ENCODE measurements at regions of chr14 and their contacts with region 1.

Region 1: GRCh38 chr14:88189417-88190191 is 133.5 kb downstream of the KCNK10 start:
- DNase-seq: peak; percentile 84
- H3K4me3 Mint-ChIP-seq: peak overlapping the region; percentile 70
- H3K27ac Mint-ChIP-seq: no peak overlapping the region
- H3K4me1 Mint-ChIP-seq: peaks cover 14% of the 10 kb centered on the region
- H3K27me3 Mint-ChIP-seq: peaks cover 9% of the 10 kb centered on the region
- CTCF ChIP-seq: peak; percentile 38

Region 2: GRCh38 chr14:87916103-87916885 is 273.3 kb before region 1 on chr14:
- CTCF ChIA-PET with region 1: no interaction called
- intact Hi-C with region 1: no loop called
- DNase-seq: no peak
- H3K4me3 Mint-ChIP-seq: no peak overlapping the region
- H3K27ac Mint-ChIP-seq: no peak overlapping the region
- H3K4me1 Mint-ChIP-seq: no peaks in the 10 kb centered on the region
- H3K27me3 Mint-ChIP-seq: no peaks in the 10 kb centered on the region
- CTCF ChIP-seq: no peak

Region 3: DNA sequence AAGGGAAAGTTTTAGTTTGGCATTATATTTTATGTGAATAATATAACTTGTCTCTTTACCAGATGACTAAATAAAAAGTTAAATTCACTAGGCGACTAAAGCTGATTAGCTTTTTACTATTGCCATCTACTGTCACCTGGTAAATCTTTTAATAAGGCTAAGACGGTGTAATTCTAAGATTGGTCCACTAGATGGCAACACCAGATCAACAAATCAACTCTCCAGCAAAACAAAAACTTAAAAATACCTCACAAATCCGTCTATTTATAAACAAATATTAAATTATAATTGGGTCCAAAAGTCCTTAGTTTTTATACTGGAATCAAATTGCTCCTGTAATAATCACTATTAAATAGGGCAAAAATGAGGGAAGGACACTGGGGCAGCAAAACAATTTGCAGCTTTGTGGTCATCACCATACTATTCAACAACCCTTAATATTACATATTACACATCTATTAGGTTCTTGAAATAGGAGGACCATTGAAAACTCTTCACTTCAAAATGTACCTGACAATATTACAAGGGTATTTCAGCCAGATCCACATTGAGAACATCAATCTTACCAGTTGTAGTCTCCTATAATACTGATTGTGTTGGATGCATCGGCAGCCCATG is 244.5 kb before region 1 on chr14:
- CTCF ChIA-PET with region 1: interaction called, 7 read pairs
- intact Hi-C with region 1: loop called (anchors 5 kb)
- DNase-seq: peak; percentile 4
- H3K4me3 Mint-ChIP-seq: no peak overlapping the region
- H3K27ac Mint-ChIP-seq: no peak overlapping the region
- H3K4me1 Mint-ChIP-seq: no peaks in the 10 kb centered on the region
- H3K27me3 Mint-ChIP-seq: no peaks in the 10 kb centered on the region
- CTCF ChIP-seq: no peak

Region 4: GRCh38 chr14:88013750-88014349 is 175.8 kb before region 1 on chr14:
- CTCF ChIA-PET with region 1: interaction called, 17 read pairs
- intact Hi-C with region 1: loop called (anchors 5 kb)
- DNase-seq: peak; percentile 72
- H3K4me3 Mint-ChIP-seq: no peak overlapping the region
- H3K27ac Mint-ChIP-seq: no peak overlapping the region
- H3K4me1 Mint-ChIP-seq: no peaks in the 10 kb centered on the region
- H3K27me3 Mint-ChIP-seq: no peaks in the 10 kb centered on the region
- CTCF ChIP-seq: peak; percentile 55

Region 5: GRCh38 chr14:88137327-88137726 is 52.3 kb before region 1 on chr14:
- CTCF ChIA-PET with region 1: no interaction called
- intact Hi-C with region 1: no loop called
- DNase-seq: no peak
- H3K4me3 Mint-ChIP-seq: no peak overlapping the region
- H3K27ac Mint-ChIP-seq: no peak overlapping the region
- H3K4me1 Mint-ChIP-seq: no peaks in the 10 kb centered on the region
- H3K27me3 Mint-ChIP-seq: peaks cover 14% of the 10 kb centered on the region
- CTCF ChIP-seq: no peak

Region 6: DNA sequence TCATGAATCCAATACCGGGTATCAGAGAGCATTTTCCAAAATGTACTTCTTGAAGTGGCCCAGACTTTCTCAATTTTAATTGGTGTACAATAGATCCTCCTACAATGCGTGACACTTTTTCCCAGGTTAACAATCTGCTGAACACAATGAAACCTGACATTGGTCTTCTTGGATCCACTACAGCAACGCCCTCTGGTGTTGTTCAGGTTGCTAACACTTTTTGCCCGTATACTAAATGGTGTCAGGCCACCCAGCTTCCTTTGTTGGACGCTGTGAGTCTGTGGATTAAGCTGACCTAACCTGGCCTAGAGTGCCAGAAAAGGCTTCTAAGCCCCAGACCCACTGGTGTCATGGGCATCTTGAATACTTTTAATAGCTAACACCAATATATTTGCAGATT is 44.3 kb after region 1 on chr14:
- CTCF ChIA-PET with region 1: interaction called, 4 read pairs
- intact Hi-C with region 1: loop called (anchors 1 kb)
- DNase-seq: peak; percentile 24
- H3K4me3 Mint-ChIP-seq: no peak overlapping the region
- H3K27ac Mint-ChIP-seq: no peak overlapping the region
- H3K4me1 Mint-ChIP-seq: no peaks in the 10 kb centered on the region
- H3K27me3 Mint-ChIP-seq: peaks cover 10% of the 10 kb centered on the region
- CTCF ChIP-seq: peak; percentile 17

Region 7: GRCh38 chr14:88281447-88281846 is 91.8 kb after region 1 on chr14:
- CTCF ChIA-PET with region 1: no interaction called
- intact Hi-C with region 1: no loop called
- DNase-seq: no peak
- H3K4me3 Mint-ChIP-seq: no peak overlapping the region
- H3K27ac Mint-ChIP-seq: no peak overlapping the region
- H3K4me1 Mint-ChIP-seq: no peaks in the 10 kb centered on the region
- H3K27me3 Mint-ChIP-seq: peaks cover 32% of the 10 kb centered on the region
- CTCF ChIP-seq: no peak

Region 8: GRCh38 chr14:88380405-88380804 is 190.8 kb after region 1 on chr14:
- CTCF ChIA-PET with region 1: interaction called, 22 read pairs
- intact Hi-C with region 1: loop called (anchors 1 kb)
- DNase-seq: no peak
- H3K4me3 Mint-ChIP-seq: no peak overlapping the region
- H3K27ac Mint-ChIP-seq: no peak overlapping the region
- H3K4me1 Mint-ChIP-seq: no peaks in the 10 kb centered on the region
- H3K27me3 Mint-ChIP-seq: no peaks in the 10 kb centered on the region
- CTCF ChIP-seq: no peak

Region 9: DNA sequence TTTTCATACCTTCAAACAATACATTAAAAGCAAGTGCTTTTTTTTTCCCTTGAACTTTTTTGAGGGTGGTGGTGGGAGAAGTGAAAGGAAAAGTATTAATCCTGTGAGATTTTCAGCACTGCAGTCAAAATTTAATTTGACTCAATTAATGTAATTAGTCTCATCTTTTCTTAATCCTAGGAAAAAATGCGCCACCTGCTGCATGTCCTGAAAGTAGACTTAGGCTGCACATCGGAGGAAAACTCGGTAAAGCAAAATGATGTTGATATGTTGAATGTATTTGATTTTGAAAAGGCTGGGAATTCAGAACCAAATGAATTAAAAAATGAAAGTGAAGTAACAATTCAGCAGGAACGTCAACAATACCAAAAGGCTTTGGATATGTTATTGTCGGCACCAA is 248.1 kb after region 1 on chr14:
- CTCF ChIA-PET with region 1: interaction called, 3 read pairs
- intact Hi-C with region 1: loop called (anchors 2 kb)
- DNase-seq: no peak
- H3K4me3 Mint-ChIP-seq: no peak overlapping the region
- H3K27ac Mint-ChIP-seq: no peak overlapping the region
- H3K4me1 Mint-ChIP-seq: no peaks in the 10 kb centered on the region
- H3K27me3 Mint-ChIP-seq: no peaks in the 10 kb centered on the region
- CTCF ChIP-seq: no peak

Region 10: GRCh38 chr14:88551094-88551870 is 361.7 kb after region 1 on chr14:
- CTCF ChIA-PET with region 1: no interaction called
- intact Hi-C with region 1: loop called (anchors 5 kb)
- DNase-seq: peak; percentile 88
- H3K4me3 Mint-ChIP-seq: peak overlapping the region; percentile 73
- H3K27ac Mint-ChIP-seq: no peak overlapping the region
- H3K4me1 Mint-ChIP-seq: peaks cover 29% of the 10 kb centered on the region
- H3K27me3 Mint-ChIP-seq: no peaks in the 10 kb centered on the region
- CTCF ChIP-seq: peak; percentile 41

Measured in Calu3 (cell line).